Activated CD4-positive, alpha-beta T cell treated with anti-CD3 and anti-CD28 coated beads for 36 hours (primary cell): ENCODE measurements at regions of chr22 and their contacts with region 1.

Region 1: DNA sequence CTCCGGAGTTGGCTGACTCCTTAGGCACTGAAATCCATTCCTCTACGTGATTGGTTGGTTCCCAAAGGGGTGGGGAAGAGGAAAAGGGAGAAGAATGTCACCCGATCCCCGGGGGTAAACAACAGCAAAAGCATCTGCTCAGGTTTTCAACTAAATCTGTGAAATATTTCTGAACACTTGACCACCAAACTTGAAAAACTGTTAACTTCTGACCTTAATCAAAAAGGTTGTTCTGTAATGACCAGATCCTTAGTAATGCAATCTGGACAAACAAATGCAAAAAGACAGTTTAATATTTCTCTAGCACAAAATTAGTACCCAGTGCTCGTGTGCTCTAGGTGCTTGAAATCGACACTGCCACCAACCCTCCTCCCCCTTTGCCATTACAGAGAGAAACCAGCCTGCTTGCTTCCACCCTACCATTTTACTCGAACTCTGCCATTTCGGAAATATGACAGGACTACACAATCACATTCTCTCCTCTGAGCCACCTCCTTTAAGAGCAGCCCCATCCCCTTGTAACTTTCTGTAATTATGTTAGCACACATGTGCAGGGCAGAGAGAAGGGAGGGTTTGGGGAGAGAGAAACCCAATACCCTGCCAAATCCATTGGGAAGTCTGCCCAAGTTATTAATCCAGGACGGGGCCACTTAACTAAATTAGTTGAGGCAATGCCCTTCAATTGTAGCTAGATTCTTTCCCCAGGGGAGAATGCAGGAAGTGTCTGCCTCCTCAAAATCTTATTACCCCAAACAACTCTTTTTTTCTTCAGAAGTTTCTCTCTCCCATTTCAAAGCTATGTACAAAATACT is 113.8 kb downstream of the RBFOX2 start:
- DNase-seq: no peak
- ATAC-seq: peak; percentile 51
- H3K4me3 Mint-ChIP-seq: peak overlapping the region; percentile 38
- H3K27ac Mint-ChIP-seq: peak overlapping the region; percentile 24
- H3K4me1 Mint-ChIP-seq: peaks cover 17% of the 10 kb centered on the region
- H3K27me3 Mint-ChIP-seq: peaks cover 2% of the 10 kb centered on the region

Region 2: DNA sequence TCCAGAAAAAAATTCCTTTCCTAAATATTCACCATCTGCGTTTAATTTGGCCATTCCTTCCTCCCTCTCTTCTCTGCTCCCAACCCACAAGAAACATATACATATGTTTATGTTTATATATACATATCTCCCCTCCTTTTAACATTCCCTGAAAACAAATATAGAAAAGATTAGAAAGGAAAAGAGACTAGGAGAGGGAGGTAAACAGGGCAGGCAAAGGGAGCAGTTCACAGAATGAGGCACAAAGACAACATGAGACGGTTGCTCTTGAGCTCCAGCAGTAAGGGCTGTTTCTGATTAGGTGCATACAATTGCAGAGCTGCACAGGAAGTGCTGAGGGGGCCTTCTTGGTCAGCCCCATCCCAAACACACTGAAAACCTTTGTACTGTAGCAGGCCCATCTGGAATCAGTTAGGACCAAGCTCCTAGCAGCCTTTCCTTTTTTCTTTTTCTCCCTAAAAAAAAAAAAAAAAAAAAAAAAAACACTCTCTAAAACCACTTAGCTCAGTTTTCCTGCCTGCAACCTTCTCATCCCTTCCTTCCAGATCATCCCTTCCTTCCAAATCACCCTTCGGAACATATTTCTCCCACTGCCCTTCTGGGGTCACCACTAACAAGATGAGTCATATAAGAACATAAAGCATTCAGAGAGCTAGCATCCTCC is 56.7 kb after region 1 on chr22:
- CTCF ChIA-PET with region 1: no interaction called
- POLR2A ChIA-PET with region 1: no interaction called
- intact Hi-C with region 1: loop called in 1 of 2 experiments (anchors 10 kb)
- DNase-seq: no peak
- ATAC-seq: no peak
- H3K4me3 Mint-ChIP-seq: no peak overlapping the region
- H3K27ac Mint-ChIP-seq: no peak overlapping the region
- H3K4me1 Mint-ChIP-seq: no peaks in the 10 kb centered on the region
- H3K27me3 Mint-ChIP-seq: no peaks in the 10 kb centered on the region

Region 3: GRCh38 chr22:36117053-36117554 is 202.2 kb after region 1 on chr22:
- CTCF ChIA-PET with region 1: no interaction called
- POLR2A ChIA-PET with region 1: no interaction called
- intact Hi-C with region 1: no loop called
- DNase-seq: no peak
- ATAC-seq: no peak
- H3K4me3 Mint-ChIP-seq: no peak overlapping the region
- H3K27ac Mint-ChIP-seq: no peak overlapping the region
- H3K4me1 Mint-ChIP-seq: no peaks in the 10 kb centered on the region
- H3K27me3 Mint-ChIP-seq: no peaks in the 10 kb centered on the region